ENCODE measurements at regions of chr11 and their contacts with region 1.

Region 1: GRCh38 chr11:101866619-101867491 is 48.0 kb upstream of the CEP126 start:
- DNase-seq: peak; percentile 69
- ATAC-seq: peak; percentile 30
- H3K4me3 ChIP-seq: no peak overlapping the region
- H3K27ac ChIP-seq: peak overlapping the region; percentile 30; the same call in 1 of the 2 replicates
- H3K4me1 ChIP-seq: peaks cover 15% of the 10 kb centered on the region; the same call in 1 of the 2 replicates
- H3K27me3 ChIP-seq: no peaks in the 10 kb centered on the region
- CTCF ChIP-seq: no peak
- POLR2A ChIP-seq: no peak
- RAD21 ChIP-seq: no peak

Region 2: GRCh38 chr11:102001657-102002338 is 134.9 kb after region 1 on chr11:
- CTCF ChIA-PET with region 1: interaction called, 58 read pairs
- POLR2A ChIA-PET with region 1: no interaction called
- dilution Hi-C with region 1: no loop called
- in situ Hi-C with region 1: loop called (anchors 5 kb)
- intact Hi-C with region 1: no loop called
- DNase-seq: no peak
- ATAC-seq: peak; percentile 35; the same call in 1 of the 2 replicates
- H3K4me3 ChIP-seq: no peak overlapping the region
- H3K27ac ChIP-seq: no peak overlapping the region
- H3K4me1 ChIP-seq: peaks cover under 1% of the 10 kb centered on the region; the same call in 1 of the 2 replicates
- H3K27me3 ChIP-seq: no peaks in the 10 kb centered on the region
- CTCF ChIP-seq: no peak
- POLR2A ChIP-seq: no peak
- RAD21 ChIP-seq: no peak

Region 3: GRCh38 chr11:102530558-102530957 is 663.7 kb after region 1 on chr11 and contains the start of gene MMP7:
- CTCF ChIA-PET with region 1: no interaction called
- POLR2A ChIA-PET with region 1: no interaction called
- dilution Hi-C with region 1: no loop called
- in situ Hi-C with region 1: no loop called
- intact Hi-C with region 1: no loop called
- DNase-seq: peak; percentile 57
- ATAC-seq: no peak; the same call in 1 of the 2 replicates
- H3K4me3 ChIP-seq: no peak within 1 kb of the TSS
- H3K27ac ChIP-seq: no peak within 1 kb of the TSS
- H3K4me1 ChIP-seq: no peaks in the 10 kb centered on the region
- H3K27me3 ChIP-seq: peaks cover 3% of the 10 kb centered on the region; the same call in 1 of the 2 replicates
- CTCF ChIP-seq: no peak
- POLR2A ChIP-seq: no peak
- RAD21 ChIP-seq: no peak
- total RNA-seq, gene MMP7: not detected in 2 replicates

Measured in IMR-90 (cell line).